MCF 10A (cell line): ENCODE measurements at regions of chr3 and their contacts with region 1.

Region 1: GRCh38 chr3:189512039-189512438 is 119.2 kb upstream of the TP63 start:
- DNase-seq: no peak
- H3K4me3 Mint-ChIP-seq: no peak overlapping the region
- H3K27ac Mint-ChIP-seq: peak overlapping the region; percentile 99
- H3K4me1 Mint-ChIP-seq: peaks cover 45% of the 10 kb centered on the region
- H3K27me3 Mint-ChIP-seq: no peaks in the 10 kb centered on the region
- CTCF ChIP-seq: no peak

Region 2: GRCh38 chr3:189276481-189277219 is 235.4 kb before region 1 on chr3:
- CTCF ChIA-PET with region 1: interaction called, 19 read pairs
- POLR2A ChIA-PET with region 1: interaction called, 87 read pairs
- intact Hi-C with region 1: no loop called
- DNase-seq: peak; percentile 95
- H3K4me3 Mint-ChIP-seq: peak overlapping the region; percentile 30
- H3K27ac Mint-ChIP-seq: peak overlapping the region; percentile 50
- H3K4me1 Mint-ChIP-seq: peaks cover 41% of the 10 kb centered on the region
- H3K27me3 Mint-ChIP-seq: no peaks in the 10 kb centered on the region
- CTCF ChIP-seq: no peak

Region 3: GRCh38 chr3:189355481-189356201 is 156.4 kb before region 1 on chr3:
- CTCF ChIA-PET with region 1: interaction called, 3 read pairs
- POLR2A ChIA-PET with region 1: interaction called, 36 read pairs
- intact Hi-C with region 1: no loop called
- DNase-seq: peak; percentile 93
- H3K4me3 Mint-ChIP-seq: no peak overlapping the region
- H3K27ac Mint-ChIP-seq: peak overlapping the region; percentile 96
- H3K4me1 Mint-ChIP-seq: peaks cover 36% of the 10 kb centered on the region
- H3K27me3 Mint-ChIP-seq: no peaks in the 10 kb centered on the region
- CTCF ChIP-seq: no peak

Region 4: GRCh38 chr3:189488241-189488767 is 23.7 kb before region 1 on chr3:
- CTCF ChIA-PET with region 1: interaction called, 6 read pairs
- POLR2A ChIA-PET with region 1: interaction called, 45 read pairs
- intact Hi-C with region 1: loop called (anchors 2 kb)
- DNase-seq: peak; percentile 97
- H3K4me3 Mint-ChIP-seq: peak overlapping the region; percentile 38
- H3K27ac Mint-ChIP-seq: peak overlapping the region; percentile 80
- H3K4me1 Mint-ChIP-seq: peaks cover 34% of the 10 kb centered on the region
- H3K27me3 Mint-ChIP-seq: no peaks in the 10 kb centered on the region
- CTCF ChIP-seq: no peak

Region 5: GRCh38 chr3:189588070-189588820 is 76.2 kb after region 1 on chr3:
- CTCF ChIA-PET with region 1: interaction called, 5 read pairs
- POLR2A ChIA-PET with region 1: interaction called, 41 read pairs
- intact Hi-C with region 1: no loop called
- DNase-seq: peak; percentile 92
- H3K4me3 Mint-ChIP-seq: peak overlapping the region; percentile 60
- H3K27ac Mint-ChIP-seq: peak overlapping the region; percentile 84
- H3K4me1 Mint-ChIP-seq: peaks cover 48% of the 10 kb centered on the region
- H3K27me3 Mint-ChIP-seq: no peaks in the 10 kb centered on the region
- CTCF ChIP-seq: no peak

Region 6: GRCh38 chr3:189613122-189613521 is 101.1 kb after region 1 on chr3:
- CTCF ChIA-PET with region 1: no interaction called
- POLR2A ChIA-PET with region 1: no interaction called
- intact Hi-C with region 1: no loop called
- DNase-seq: no peak
- H3K4me3 Mint-ChIP-seq: no peak overlapping the region
- H3K27ac Mint-ChIP-seq: no peak overlapping the region
- H3K4me1 Mint-ChIP-seq: no peaks in the 10 kb centered on the region
- H3K27me3 Mint-ChIP-seq: no peaks in the 10 kb centered on the region
- CTCF ChIP-seq: no peak

Region 7: GRCh38 chr3:189833996-189834395 is 322.0 kb after region 1 on chr3:
- CTCF ChIA-PET with region 1: no interaction called
- POLR2A ChIA-PET with region 1: interaction called, 34 read pairs
- intact Hi-C with region 1: no loop called
- DNase-seq: peak; percentile 99
- H3K4me3 Mint-ChIP-seq: peak overlapping the region; percentile 26
- H3K27ac Mint-ChIP-seq: peak overlapping the region; percentile 37
- H3K4me1 Mint-ChIP-seq: peaks cover 41% of the 10 kb centered on the region
- H3K27me3 Mint-ChIP-seq: no peaks in the 10 kb centered on the region
- CTCF ChIP-seq: no peak